ENCODE measurements at regions of chr2 and their contacts with region 1.

Region 1: DNA sequence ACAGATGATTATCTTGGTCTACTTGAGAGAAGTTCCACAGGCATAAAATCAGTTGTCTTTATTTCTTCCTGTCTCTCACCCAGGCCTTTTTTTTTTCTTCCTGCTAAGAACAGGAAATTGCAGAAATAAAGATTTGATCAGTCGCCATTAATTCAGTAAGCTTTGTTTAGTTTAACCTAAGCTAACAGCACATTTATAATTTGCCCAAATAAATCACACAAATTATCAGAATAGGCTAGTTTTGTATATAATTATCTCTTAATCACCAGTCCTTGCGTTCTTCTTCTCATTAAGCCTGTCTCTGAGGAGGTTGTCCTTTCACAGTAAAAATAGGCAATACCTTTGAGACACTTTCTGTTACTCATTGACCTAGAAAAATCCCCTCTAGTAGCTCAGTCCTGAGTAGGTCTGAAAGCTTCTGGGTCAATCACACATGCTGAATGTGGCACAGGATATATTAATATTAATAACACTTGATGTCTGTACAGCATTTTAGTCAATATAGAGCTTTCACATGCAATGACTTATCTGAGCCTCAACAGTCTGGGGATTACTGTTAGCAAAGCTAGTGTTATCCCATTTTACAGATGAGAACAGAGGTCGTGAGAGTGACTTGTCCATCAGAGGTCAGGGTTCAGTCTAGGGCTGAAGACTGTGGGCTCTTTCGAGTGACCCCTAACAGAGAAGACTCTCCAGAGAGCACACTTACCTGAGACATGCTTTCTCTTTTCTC is 11.2 kb upstream of the STK17B start:
- DNase-seq: no peak
- H3K4me3 Mint-ChIP-seq: peak overlapping the region; percentile 70
- H3K27ac Mint-ChIP-seq: peak overlapping the region; percentile 93
- H3K4me1 Mint-ChIP-seq: peaks cover 89% of the 10 kb centered on the region
- H3K27me3 Mint-ChIP-seq: no peaks in the 10 kb centered on the region

Region 2: DNA sequence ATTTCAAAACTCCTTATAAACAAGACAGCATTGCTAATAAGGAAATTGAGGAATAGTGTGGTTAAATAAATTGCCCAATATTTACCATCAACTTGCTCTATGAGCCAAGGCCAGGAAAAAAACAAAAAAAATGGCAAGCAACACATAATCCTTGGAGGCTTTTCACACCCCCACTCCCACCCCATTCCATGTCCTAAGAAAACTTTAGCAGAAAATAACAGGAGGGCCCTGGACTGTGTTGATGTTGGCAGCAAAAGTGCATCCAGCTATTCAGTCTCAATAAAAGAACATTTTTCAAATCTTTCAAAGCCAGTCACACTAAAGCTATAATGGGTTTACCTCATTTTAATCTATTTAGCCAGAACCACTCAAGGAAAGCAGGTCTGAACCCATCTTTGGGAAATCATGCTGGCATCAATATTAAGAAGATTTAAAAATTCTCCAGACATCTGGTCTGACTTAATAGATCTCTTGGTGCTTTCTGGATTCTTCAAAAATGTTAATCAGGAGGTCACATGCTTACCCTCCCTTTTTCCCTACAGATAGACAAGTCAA is 23.4 kb after region 1 on chr2:
- CTCF ChIA-PET with region 1: interaction called, 10 read pairs
- DNase-seq: no peak
- H3K4me3 Mint-ChIP-seq: no peak overlapping the region
- H3K27ac Mint-ChIP-seq: no peak overlapping the region
- H3K4me1 Mint-ChIP-seq: peaks cover 53% of the 10 kb centered on the region
- H3K27me3 Mint-ChIP-seq: no peaks in the 10 kb centered on the region

Measured in activated naive CD4-positive, alpha-beta T cell treated with anti-CD3 and anti-CD28 coated beads, Interleukin-2, amount 10 ng/mL, durations not matched to agents 7 days and 5 days (primary cell).